Dorsolateral prefrontal cortex (tissue), 120 donors: ENCODE measurements at regions of chr10 and their contacts with region 1.

Region 1: GRCh38 chr10:128263891-128264688 is 137.9 kb upstream of the MKI67 start:
- DNase-seq: peak; percentile 42 to 92 (median 76)
- H3K4me3 ChIP-seq: peak overlapping the region in 1 of 59 donors; percentile 2
- H3K27ac ChIP-seq: no peak overlapping the region
- H3K27me3 ChIP-seq: peaks cover 0 to 72% (median 49%) of the 10 kb centered on the region in 45 donors
- CTCF ChIP-seq: peak; percentile 51 to 85 (median 71)

Region 2: DNA sequence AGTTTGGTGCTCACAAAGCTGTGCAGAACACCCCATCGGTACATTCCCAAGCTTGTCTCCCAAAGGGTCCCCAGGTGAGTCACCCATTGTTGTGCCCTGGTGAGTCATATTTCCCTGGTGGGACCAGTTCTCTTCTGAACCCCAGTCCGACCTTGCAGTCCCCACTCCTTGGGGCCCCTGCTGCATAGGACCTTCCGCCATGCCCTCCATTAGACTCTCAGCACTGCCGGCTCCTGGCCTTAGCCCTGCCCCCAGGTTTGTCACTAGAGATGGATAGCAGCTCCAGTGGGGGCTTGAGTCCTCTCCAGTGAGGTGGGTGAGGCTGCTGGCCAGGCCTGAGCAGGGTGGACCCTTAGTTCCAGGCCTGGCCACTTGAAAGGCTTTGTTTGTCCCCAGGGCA is 57.4 kb before region 1 on chr10:
- intact Hi-C with region 1: no loop called
- DNase-seq: no peak
- H3K4me3 ChIP-seq: no peak overlapping the region
- H3K27ac ChIP-seq: no peak overlapping the region
- H3K27me3 ChIP-seq: peaks cover 0 to 73% (median 21%) of the 10 kb centered on the region in 45 donors
- CTCF ChIP-seq: no peak

Region 3: DNA sequence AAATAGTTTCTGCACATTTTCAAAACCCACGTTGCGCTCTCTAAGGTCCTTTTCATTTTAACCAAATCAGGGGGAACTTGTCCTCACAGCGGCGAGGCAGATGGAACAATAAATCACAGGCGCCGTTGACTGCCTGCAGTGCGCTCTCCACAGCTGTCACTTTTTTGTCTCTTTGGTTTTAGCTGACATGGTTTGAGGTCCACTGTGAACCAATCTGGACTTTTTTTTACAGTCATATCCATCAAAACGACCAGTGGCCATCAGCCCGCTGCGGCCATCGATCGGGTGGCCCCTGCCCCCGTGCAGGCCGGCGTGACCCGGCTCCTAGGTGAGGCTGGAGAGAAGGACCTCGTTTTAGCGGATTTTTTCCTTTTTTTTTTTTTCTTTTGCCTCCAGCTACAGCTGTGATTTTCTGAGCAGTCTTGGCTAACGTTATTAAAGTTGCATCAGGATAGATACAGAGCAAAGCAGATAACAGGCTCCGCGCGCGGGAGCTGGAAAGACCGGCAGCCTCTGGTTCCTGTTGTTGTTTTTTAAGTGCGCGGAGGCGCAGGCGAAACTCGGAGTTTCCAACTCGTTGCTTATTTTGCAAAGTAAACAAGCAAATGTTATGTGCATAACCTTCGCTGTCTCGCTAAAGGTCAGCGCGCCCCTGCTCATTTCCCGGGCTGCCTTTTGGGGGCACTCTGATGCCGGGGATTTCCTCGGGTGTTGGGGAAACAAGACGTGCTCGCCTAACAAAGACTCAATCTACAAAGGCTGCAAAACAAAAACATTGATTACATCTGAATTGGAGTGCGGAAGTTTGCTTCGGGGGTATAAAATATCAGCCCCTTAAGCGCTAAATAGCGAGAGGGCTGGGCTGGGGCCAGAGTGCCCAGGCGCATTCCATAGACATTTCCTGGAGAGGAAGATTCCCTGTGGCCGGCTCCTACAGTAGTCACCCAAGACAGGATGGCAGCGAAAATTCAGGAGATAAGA is 277.0 kb after region 1 on chr10:
- intact Hi-C with region 1: loop called (anchors 5 kb)
- DNase-seq: peak in 4 of 10 donors; percentile 22 to 66 (median 46)
- H3K4me3 ChIP-seq: peak overlapping the region in 43 of 59 donors; percentile 1 to 58 (median 31)
- H3K27ac ChIP-seq: no peak overlapping the region
- H3K27me3 ChIP-seq: peaks cover 0 to 87% (median 58%) of the 10 kb centered on the region in 45 donors
- CTCF ChIP-seq: peak in 44 of 56 donors; percentile 18 to 67 (median 45)

Region 4: GRCh38 chr10:129971381-129972144 is 1707.5 kb after region 1 on chr10:
- intact Hi-C with region 1: loop called in 1 of 2 experiments (anchors 5 kb)
- DNase-seq: peak in 1 of 10 donors; percentile 31
- H3K4me3 ChIP-seq: peak overlapping the region in 33 of 59 donors; percentile 18 to 56 (median 39)
- H3K27ac ChIP-seq: no peak overlapping the region
- H3K27me3 ChIP-seq: peaks cover 22 to 100% (median 91%) of the 10 kb centered on the region in 45 donors
- CTCF ChIP-seq: peak in 41 of 56 donors; percentile 9 to 80 (median 41)